ENCODE measurements at regions of chr22 and their contacts with region 1.

Region 1: DNA sequence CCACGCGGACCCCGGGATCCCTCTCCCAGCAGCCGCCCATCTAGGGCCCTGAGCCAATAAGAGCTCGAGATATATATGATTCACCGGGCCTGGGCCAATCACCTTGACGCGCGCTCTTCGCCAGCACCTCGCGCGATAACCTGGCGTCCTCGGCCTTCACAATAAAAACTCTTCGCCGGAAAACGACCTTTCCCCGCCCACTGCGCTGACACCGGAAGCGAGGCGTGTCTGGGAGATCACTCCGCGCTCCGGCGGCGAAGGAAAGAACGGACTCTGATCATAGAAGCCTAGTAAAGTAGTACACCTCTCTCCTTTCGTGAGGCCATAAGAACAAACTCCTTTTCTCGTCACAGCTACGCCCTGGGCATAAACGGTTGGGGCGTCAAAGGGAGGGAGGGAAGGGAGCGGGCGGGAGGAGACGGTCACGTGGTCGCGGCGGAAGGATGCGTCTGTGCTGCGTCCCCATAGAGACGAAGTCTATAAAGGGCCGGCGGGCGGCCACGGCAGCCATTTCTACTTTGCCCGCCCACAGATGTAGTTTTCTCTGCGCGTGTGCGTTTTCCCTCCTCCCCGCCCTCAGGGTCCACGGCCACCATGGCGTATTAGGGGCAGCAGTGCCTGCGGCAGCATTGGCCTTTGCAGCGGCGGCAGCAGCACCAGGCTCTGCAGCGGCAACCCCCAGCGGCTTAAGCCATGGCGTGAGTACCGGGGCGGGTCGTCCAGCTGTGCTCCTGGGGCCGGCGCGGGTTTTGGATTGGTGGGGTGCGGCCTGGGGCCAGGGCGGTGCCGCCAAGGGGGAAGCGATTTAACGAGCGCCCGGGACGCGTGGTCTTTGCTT is at the start of gene ATF4:
- DNase-seq: peak; percentile 97 to 99 (median 99)
- H3K4me3 ChIP-seq: peak within 1 kb of the TSS; percentile 76 to 100 (median 92)
- H3K27ac ChIP-seq: peak within 1 kb of the TSS; percentile 94 to 99 (median 98)
- H3K4me1 ChIP-seq: peaks cover 33 to 50% of the 10 kb centered on the region in 2 donors
- H3K27me3 ChIP-seq: no peaks in the 10 kb centered on the region
- CTCF ChIP-seq: no peak
- POLR2A ChIP-seq: peak; percentile 97 to 98
- total RNA-seq, gene ATF4: 207 to 498 (median 323) TPM

Region 2: DNA sequence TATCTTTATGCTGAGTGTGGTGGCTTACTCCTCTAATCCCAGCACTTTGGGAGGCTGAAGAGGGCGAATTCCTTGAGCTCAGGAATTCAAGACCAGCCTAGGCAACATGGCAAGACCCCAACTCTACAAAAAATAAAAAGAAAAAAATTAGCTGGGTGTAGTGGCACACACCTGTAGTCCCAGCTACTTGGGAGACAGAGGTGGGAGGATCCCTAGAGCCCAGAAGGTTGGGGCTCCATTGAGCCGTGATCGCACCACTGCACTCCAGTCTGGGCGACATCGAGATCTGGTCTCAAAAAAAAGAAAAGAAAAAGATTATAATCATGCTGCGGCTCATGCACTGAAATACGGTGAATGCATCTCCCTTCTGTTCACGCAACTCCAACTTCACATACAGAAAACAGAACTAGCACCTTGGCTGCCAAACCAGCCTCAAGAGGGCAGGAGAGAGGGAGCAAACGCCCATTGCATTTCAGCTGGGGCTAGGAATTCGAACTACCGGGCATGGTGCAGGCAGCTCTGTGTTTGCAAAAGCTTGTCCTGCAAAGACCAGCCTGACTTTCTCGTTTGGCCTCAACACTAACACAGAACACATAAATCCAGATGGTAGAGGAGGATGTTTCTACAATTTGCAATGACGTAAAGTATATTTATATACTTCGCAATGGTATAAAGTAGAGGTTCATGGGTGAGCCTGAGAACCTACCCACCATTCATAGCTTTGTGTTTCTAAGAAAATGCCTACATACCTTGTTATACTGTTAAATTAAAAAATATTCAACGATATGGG is 176.8 kb before region 1 on chr22:
- intact Hi-C with region 1: loop called (anchors 10 kb)
- DNase-seq: peak; percentile 55 to 86 (median 74)
- H3K4me3 ChIP-seq: no peak overlapping the region
- H3K27ac ChIP-seq: no peak overlapping the region
- H3K4me1 ChIP-seq: no peaks in the 10 kb centered on the region
- H3K27me3 ChIP-seq: no peaks in the 10 kb centered on the region
- CTCF ChIP-seq: peak; percentile 58 to 74 (median 62)
- POLR2A ChIP-seq: no peak

Region 3: DNA sequence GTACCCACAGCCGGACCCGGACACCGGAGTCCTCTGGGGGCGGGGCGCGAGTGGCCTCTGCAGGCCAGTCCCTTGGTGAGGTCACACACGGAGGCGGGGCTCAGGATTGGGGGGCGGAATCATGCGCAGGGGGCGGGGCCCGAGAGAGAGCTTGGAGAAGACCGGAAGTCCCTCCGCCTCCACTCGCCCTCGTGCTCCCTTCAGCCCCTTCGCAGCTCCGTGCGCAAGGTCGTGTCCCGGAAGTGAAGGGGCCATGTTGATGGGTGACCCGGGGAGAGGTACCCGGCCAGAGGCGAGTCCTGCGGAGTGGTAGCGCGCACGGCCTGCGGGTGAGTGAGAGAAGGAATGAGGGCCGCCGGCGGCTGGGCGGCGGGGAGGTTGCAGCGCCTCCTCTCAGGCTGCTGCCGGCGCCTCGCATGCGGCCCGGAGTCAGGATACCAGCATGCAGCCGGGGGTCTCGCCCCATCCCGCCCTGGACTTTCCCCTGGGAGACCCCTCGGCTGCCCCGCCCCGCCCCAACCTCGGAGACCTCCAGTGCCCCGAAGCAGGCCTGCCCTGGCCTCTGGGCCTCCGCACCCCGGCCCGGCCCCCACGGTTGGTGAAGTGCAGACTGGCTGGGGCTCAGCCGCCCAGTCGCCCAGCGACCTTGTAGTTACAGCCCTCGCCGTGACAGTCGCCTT is 18.0 kb before region 1 on chr22 and contains the start of gene MIEF1:
- intact Hi-C with region 1: loop called in 1 of 2 experiments (anchors 2 kb)
- DNase-seq: peak; percentile 98 to 99 (median 99)
- H3K4me3 ChIP-seq: peak within 1 kb of the TSS in 3 of 4 donors; percentile 36 to 90 (median 41)
- H3K27ac ChIP-seq: peak within 1 kb of the TSS in 4 of 5 donors; percentile 59 to 95 (median 92)
- H3K4me1 ChIP-seq: peaks cover 24% of the 10 kb centered on the region in 2 donors
- H3K27me3 ChIP-seq: no peaks in the 10 kb centered on the region
- CTCF ChIP-seq: no peak
- POLR2A ChIP-seq: peak in 1 of 2 donors; percentile 46
- total RNA-seq, gene MIEF1: 21.0 to 44.2 (median 26.8) TPM